ENCODE measurements at regions of chr5 and their contacts with region 1.

Region 1: DNA sequence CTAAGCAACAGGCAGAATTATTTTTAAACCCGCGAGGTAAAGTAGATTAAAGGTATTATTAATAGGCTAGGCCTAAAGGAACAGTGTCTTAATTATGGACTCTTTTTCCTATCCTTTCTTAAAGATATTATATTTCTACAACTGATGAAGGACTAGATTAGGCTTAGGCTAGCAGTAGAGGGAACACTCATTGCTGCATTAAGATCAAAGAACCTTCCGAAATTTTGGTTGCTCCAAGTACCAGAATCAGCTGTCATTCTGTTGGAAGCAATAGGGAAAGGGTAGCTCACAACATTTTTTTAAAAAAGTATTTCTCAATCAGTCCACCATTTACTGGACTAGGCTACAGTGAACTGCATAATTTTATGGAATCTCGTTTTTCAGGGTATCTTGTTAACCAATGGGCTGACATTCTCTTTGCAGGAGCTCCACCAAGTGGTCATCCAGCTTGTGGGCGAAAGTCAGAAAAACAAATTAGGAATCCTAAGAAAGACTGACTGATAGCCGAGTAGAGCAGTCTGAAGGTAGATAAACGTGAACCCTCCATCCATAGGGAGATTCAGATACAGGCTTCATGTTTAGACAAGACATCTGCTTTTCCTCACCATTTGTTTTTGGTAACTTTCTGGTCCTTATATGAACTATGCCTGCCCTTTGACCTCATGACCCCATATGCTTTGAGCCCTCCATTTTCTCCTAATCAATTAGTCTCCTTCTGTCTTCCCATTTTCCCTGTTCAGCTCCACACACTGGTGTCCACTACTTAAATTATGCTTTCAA is 103.6 kb upstream of the CHD1 start:
- DNase-seq: peak in 3 of 9 donors; percentile 22 to 43 (median 38)
- ATAC-seq: peak; percentile 49
- H3K4me3 ChIP-seq: peak overlapping the region; percentile 43
- H3K4me3 Mint-ChIP-seq: peak overlapping the region; percentile 71 to 97 (median 88)
- H3K27ac ChIP-seq: peak overlapping the region; percentile 70
- H3K27ac Mint-ChIP-seq: peak overlapping the region; percentile 85 to 98 (median 96)
- H3K4me1 ChIP-seq: peaks cover 30 to 31% of the 10 kb centered on the region in 2 donors
- H3K4me1 Mint-ChIP-seq: peaks cover 32 to 87% (median 79%) of the 10 kb centered on the region in 7 donors
- H3K27me3 ChIP-seq: no peaks in the 10 kb centered on the region
- H3K27me3 Mint-ChIP-seq: no peaks in the 10 kb centered on the region

Region 2: DNA sequence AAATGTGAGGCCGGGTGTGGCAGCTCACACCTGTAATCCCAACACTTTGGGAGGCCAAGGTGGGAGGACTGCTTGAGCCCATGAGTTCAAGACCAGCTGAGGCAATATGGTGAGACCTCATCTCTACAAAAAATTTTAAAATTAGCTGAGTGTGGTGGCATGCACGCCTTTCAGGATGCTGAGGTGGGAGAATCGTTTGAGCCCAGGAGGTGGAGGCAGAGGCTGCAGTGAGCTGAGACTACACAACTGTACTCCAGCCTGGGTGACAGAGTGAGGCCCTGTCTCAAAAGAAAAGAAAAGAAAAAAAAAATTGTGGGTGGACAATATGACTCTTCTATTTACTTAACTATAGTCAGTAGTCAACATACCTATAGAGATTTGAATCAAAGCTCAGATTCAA is 108.5 kb before region 1 on chr5:
- CTCF ChIA-PET with region 1: interaction called, 11 read pairs
- POLR2A ChIA-PET with region 1: interaction called, 89 read pairs
- intact Hi-C with region 1: loop called (anchors 1 kb)
- DNase-seq: no peak
- ATAC-seq: no peak
- H3K4me3 ChIP-seq: no peak overlapping the region
- H3K4me3 Mint-ChIP-seq: peak overlapping the region in 7 of 10 donors; percentile 16 to 67 (median 27)
- H3K27ac ChIP-seq: no peak overlapping the region
- H3K27ac Mint-ChIP-seq: peak overlapping the region in 3 of 9 donors; percentile 59 to 67 (median 64)
- H3K4me1 ChIP-seq: peaks cover 16 to 28% of the 10 kb centered on the region in 2 donors
- H3K4me1 Mint-ChIP-seq: peaks cover 38 to 89% (median 79%) of the 10 kb centered on the region in 7 donors
- H3K27me3 ChIP-seq: no peaks in the 10 kb centered on the region
- H3K27me3 Mint-ChIP-seq: peaks cover 0 to 2% (median 0%) of the 10 kb centered on the region in 5 donors

Region 3: GRCh38 chr5:99068944-99069650 is 36.7 kb after region 1 on chr5:
- CTCF ChIA-PET with region 1: no interaction called
- POLR2A ChIA-PET with region 1: no interaction called
- intact Hi-C with region 1: no loop called
- DNase-seq: no peak
- ATAC-seq: no peak
- H3K4me3 ChIP-seq: no peak overlapping the region
- H3K4me3 Mint-ChIP-seq: no peak overlapping the region
- H3K27ac ChIP-seq: no peak overlapping the region
- H3K27ac Mint-ChIP-seq: no peak overlapping the region
- H3K4me1 ChIP-seq: no peaks in the 10 kb centered on the region
- H3K4me1 Mint-ChIP-seq: no peaks in the 10 kb centered on the region
- H3K27me3 ChIP-seq: no peaks in the 10 kb centered on the region
- H3K27me3 Mint-ChIP-seq: peaks cover 0 to 4% (median 0%) of the 10 kb centered on the region in 5 donors